ENCODE measurements at regions of chr11 and their contacts with region 1.

Region 1: DNA sequence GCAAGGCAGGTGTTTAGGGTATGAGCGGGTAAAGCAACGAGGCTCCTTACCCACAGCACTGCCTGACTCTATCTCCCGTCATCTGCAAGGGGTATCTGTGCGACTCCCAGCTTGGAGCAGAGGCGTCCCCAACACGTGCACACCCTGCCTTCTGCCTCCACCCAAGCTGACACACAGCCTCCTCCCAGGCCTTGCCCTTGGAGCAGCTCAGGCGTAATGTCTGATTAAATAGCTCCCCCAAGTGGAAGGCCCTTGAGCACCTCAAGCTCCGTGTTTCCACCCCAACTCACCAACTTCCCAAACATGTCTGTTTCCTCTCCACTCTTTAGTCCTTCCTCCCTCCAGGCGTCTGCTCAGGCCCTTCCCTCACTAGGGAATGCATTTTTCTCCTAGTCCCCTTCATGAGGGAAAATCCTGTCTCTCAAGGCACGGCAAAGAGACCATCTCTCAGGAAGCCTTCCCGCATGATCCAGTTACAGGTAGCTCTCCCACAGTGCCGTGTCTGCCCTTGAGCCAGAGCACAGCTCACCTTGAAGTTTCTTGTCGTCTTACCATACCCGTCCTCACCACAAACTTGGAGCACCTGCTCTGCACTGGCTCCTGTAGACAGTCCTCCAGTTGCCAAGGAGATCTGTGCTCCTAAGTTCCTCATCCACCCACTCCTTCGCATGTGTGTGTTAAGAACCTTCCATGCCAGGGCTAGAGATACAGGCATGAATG is 15.8 kb downstream of the CYB5R2 start:
- DNase-seq: peak; percentile 73
- ATAC-seq: peak; percentile 97

Region 2: DNA sequence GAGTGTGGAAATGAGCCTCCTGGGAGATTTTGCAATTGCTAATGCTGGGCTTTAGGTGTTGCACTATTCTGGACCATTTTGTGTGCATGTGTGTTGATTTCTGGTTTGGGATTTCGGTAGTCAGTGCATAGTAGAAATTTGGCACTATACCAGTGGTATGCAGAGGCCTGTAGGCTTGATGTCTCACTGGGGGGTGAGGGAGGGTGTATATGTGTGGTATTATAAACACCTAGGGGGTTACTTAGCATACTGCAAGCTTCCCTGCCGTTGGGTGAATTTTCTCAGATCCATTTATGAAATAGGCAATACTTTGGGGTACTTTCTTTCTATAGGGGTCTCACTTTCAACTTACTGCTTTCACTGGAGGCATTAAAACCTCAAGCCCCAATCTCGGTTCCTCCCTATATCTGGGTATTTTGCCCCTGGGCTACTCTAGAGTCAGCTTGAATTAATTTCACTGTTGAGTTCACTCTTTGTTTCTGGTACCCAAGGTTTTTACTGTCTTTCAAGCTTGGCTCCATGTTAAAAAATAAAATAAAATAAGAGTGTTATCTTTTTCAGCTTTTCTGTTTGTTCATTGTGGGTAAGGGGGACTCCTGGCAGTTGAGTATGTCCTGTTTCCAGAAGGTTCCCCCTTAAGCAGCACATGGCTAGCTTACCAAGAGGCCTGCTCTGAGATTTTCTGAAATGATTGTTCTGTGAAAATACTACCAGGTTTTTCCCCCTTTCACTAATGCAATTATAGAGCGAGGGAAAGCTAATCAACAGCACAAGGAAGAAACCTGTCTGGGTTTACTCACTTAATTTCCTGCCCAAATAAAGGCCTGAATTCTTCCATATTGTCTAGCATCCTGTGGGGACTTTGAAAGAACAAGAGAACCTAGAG is 97.8 kb before region 1 on chr11:
- intact Hi-C with region 1: no loop called
- DNase-seq: no peak
- ATAC-seq: no peak

Region 3: GRCh38 chr11:7571640-7572000 is 85.8 kb before region 1 on chr11:
- intact Hi-C with region 1: loop called (anchors 5 kb)
- DNase-seq: peak; percentile 84
- ATAC-seq: peak; percentile 74

Measured in sciatic nerve (tissue), 2 donors.